Transverse colon (tissue), 4 donors: ENCODE measurements at regions of chr17 and their contacts with region 1.

Region 1: GRCh38 chr17:56939901-56940343 is 20.9 kb downstream of the COIL start:
- DNase-seq: no peak
- H3K4me3 ChIP-seq: no peak overlapping the region
- H3K27ac ChIP-seq: no peak overlapping the region
- H3K4me1 ChIP-seq: no peaks in the 10 kb centered on the region
- H3K27me3 ChIP-seq: no peaks in the 10 kb centered on the region
- CTCF ChIP-seq: peak; percentile 66 to 78 (median 74)
- EP300 ChIP-seq: no peak
- POLR2A ChIP-seq: no peak

Region 2: GRCh38 chr17:56819431-56820145 is 120.3 kb before region 1 on chr17:
- in situ Hi-C with region 1: loop called in 3 of 4 experiments (anchors 5 to 25 kb)
- intact Hi-C with region 1: loop called (anchors 5 kb)
- DNase-seq: peak; percentile 82
- H3K4me3 ChIP-seq: no peak overlapping the region
- H3K27ac ChIP-seq: no peak overlapping the region
- H3K4me1 ChIP-seq: peaks cover 0 to 16% (median 6%) of the 10 kb centered on the region in 4 donors
- H3K27me3 ChIP-seq: no peaks in the 10 kb centered on the region
- CTCF ChIP-seq: peak; percentile 80 to 93 (median 89)
- EP300 ChIP-seq: no peak
- POLR2A ChIP-seq: no peak

Region 3: GRCh38 chr17:56826611-56827414 is 113.1 kb before region 1 on chr17:
- in situ Hi-C with region 1: loop called in 2 of 4 experiments (anchors 5 to 25 kb)
- intact Hi-C with region 1: no loop called
- DNase-seq: no peak
- H3K4me3 ChIP-seq: no peak overlapping the region
- H3K27ac ChIP-seq: no peak overlapping the region
- H3K4me1 ChIP-seq: peaks cover 0 to 20% (median 3%) of the 10 kb centered on the region in 4 donors
- H3K27me3 ChIP-seq: no peaks in the 10 kb centered on the region
- CTCF ChIP-seq: no peak
- EP300 ChIP-seq: no peak
- POLR2A ChIP-seq: no peak

Region 4: GRCh38 chr17:56891784-56892183 is 48.1 kb before region 1 on chr17:
- in situ Hi-C with region 1: no loop called
- intact Hi-C with region 1: loop called (anchors 5 kb)
- DNase-seq: peak; percentile 36
- H3K4me3 ChIP-seq: no peak overlapping the region
- H3K27ac ChIP-seq: no peak overlapping the region
- H3K4me1 ChIP-seq: peaks cover 0 to 5% (median 2%) of the 10 kb centered on the region in 4 donors
- H3K27me3 ChIP-seq: no peaks in the 10 kb centered on the region
- CTCF ChIP-seq: peak; percentile 26 to 37 (median 33)
- EP300 ChIP-seq: no peak
- POLR2A ChIP-seq: no peak

Region 5: GRCh38 chr17:56975656-56976055 is 35.7 kb after region 1 on chr17:
- in situ Hi-C with region 1: no loop called
- intact Hi-C with region 1: loop called (anchors 2 kb)
- DNase-seq: no peak
- H3K4me3 ChIP-seq: no peak overlapping the region
- H3K27ac ChIP-seq: no peak overlapping the region
- H3K4me1 ChIP-seq: peaks cover 0 to 22% (median 14%) of the 10 kb centered on the region in 4 donors
- H3K27me3 ChIP-seq: no peaks in the 10 kb centered on the region
- CTCF ChIP-seq: no peak
- EP300 ChIP-seq: no peak
- POLR2A ChIP-seq: no peak

Region 6: GRCh38 chr17:57035971-57036481 is 96.1 kb after region 1 on chr17:
- in situ Hi-C with region 1: no loop called
- intact Hi-C with region 1: no loop called
- DNase-seq: peak; percentile 80
- H3K4me3 ChIP-seq: peak overlapping the region in 1 of 4 donors; percentile 29
- H3K27ac ChIP-seq: peak overlapping the region; percentile 82 to 92 (median 88)
- H3K4me1 ChIP-seq: peaks cover 9 to 81% (median 61%) of the 10 kb centered on the region in 4 donors
- H3K27me3 ChIP-seq: no peaks in the 10 kb centered on the region
- CTCF ChIP-seq: no peak
- EP300 ChIP-seq: no peak
- POLR2A ChIP-seq: peak; percentile 39